ENCODE measurements at regions of chr19 and their contacts with region 1.

Region 1: DNA sequence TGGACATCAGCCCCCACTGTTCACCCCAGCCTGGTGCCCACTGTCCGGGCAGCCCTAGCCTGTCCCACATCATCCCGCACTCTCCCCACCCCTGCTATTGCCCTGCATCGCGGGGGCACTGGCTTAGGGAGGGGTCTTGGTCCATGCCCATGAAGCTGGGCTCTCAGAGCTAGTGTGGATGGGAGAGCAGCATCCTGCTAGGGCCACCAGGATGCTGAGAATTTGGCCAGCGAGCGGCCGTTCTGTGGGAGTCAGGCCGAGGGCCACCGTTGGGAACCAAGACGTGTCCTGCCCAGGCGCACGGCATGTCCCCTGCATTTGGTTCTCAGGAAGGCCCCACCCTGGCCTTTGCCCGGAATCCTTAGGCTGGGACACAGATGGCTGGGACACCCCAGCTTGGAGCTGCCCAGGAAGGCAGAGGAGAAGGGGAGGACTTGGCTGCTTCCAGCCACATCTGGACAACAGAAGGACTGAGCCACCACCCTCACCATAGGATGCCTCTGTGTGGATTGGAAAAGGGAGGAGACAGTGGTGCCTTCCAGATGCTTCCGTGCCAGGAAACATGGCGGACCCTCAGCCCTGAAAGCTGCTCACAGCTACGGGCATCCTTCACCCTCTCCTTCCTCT is 14.6 kb downstream of the ADGRE5 start:
- DNase-seq: no peak
- H3K4me3 ChIP-seq: no peak overlapping the region
- H3K27ac ChIP-seq: no peak overlapping the region
- H3K4me1 ChIP-seq: no peaks in the 10 kb centered on the region
- H3K27me3 ChIP-seq: no peaks in the 10 kb centered on the region
- CTCF ChIP-seq: no peak
- POLR2A ChIP-seq: no peak

Region 2: DNA sequence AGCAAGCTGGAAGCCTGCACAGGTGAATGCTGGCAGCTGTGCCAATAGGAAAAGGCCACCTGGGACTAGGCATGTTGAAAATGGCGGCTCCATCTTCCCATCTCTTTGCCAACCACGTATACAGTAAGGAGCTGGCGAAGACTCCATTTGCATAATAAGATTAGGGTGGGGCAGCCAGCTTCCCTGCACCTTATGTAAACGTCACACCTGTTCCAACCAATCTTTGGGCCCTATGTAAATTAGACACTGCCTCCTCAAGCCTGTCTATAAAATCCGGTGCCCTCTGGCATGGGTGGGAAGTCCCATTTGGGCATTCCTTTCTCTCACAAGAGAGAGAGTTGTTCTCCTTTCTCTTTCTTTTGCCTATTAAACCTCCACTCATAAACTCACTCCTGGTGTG is 365.8 kb after region 1 on chr19:
- intact Hi-C with region 1: loop called (anchors 10 kb)
- DNase-seq: no peak
- H3K4me3 ChIP-seq: no peak overlapping the region
- H3K27ac ChIP-seq: no peak overlapping the region
- H3K4me1 ChIP-seq: no peaks in the 10 kb centered on the region
- H3K27me3 ChIP-seq: no peaks in the 10 kb centered on the region
- CTCF ChIP-seq: no peak
- POLR2A ChIP-seq: no peak